ENCODE measurements at regions of chr5 and their contacts with region 1.

Region 1: DNA sequence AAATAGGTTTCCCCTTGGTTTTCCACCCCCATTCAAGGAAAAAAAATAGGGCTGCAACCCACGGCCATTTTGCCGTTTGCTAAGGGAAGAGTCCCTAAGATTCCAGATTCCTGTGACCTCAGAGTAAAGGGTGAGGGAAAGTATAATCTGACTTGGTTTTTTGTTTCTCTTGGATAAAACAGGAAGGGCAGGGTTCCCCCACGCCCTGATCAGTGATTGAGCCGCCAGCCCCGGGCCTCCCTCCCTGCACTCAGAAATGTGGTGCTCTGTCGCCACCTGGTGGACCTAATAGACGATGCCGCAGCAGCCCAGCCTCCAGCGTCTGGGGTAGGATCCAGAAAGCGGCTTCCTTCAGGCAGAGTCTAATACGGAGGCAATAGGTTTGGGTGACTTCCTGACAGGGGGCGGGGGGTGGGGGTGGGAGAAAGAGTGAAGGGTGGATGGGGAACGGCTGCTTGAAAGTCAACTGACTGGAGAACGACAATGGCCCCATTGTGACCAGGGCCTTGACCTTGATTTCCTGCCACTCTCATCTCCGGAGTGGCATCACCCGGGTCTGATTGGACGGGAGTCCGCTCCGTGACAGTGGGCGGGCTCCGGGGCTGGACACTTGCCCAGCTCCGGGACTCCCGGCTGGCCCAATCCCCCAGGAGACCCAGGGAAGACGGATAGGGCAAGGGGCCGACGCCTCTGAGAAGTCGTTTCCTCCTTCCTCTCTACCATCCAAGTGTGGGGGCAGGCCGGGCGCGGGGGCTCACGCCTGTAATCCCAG is 17.8 kb upstream of the CYSTM1 start:
- DNase-seq: peak; percentile 90
- ATAC-seq: peak; percentile 97
- H3K4me3 ChIP-seq: no peak overlapping the region
- H3K27ac ChIP-seq: no peak overlapping the region
- H3K4me1 ChIP-seq: peaks cover 0 to 10% of the 10 kb centered on the region in 2 experiments; a peak in 2 of 5 replicates
- H3K27me3 ChIP-seq: peaks cover 0 to 4% of the 10 kb centered on the region in 2 experiments; a peak in 1 of 5 replicates
- CTCF ChIP-seq: peak; percentile 88 to 95 (median 94)
- EP300 ChIP-seq: no peak
- POLR2A ChIP-seq: no peak
- RAD21 ChIP-seq: peak; percentile 93 to 96

Region 2: DNA sequence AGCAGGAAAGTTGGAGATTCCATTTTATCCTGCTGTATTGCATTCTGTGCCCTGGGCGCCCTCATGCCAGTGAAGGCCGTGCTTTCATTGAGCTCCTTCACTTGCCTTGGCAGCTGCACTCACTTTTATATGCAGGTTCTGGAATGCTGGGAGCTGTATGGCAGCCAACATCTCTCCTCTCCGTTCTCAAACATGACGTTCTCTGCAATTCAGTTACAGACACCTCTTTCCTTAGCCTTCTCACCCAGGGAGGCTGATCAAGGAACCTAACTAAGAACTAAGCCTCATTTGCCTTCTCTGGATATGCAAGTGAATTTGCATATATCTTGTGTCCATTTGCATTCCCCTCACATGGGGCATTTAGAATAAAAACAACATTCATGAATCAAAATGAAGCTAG is 72.7 kb before region 1 on chr5:
- CTCF ChIA-PET with region 1: no interaction called
- POLR2A ChIA-PET with region 1: interaction called, 4 read pairs
- in situ Hi-C with region 1: loop called (anchors 5 kb)
- intact Hi-C with region 1: no loop called
- DNase-seq: no peak
- ATAC-seq: no peak
- H3K4me3 ChIP-seq: no peak overlapping the region
- H3K27ac ChIP-seq: no peak overlapping the region
- H3K4me1 ChIP-seq: no peaks in the 10 kb centered on the region
- H3K27me3 ChIP-seq: peaks cover 5 to 8% of the 10 kb centered on the region in 2 experiments; a peak in 4 of 5 replicates
- CTCF ChIP-seq: no peak
- EP300 ChIP-seq: no peak
- POLR2A ChIP-seq: no peak
- RAD21 ChIP-seq: no peak

Region 3: GRCh38 chr5:140107312-140108083 is 49.7 kb before region 1 on chr5:
- CTCF ChIA-PET with region 1: no interaction called
- POLR2A ChIA-PET with region 1: interaction called, 4 read pairs
- in situ Hi-C with region 1: no loop called
- intact Hi-C with region 1: loop called (anchors 2 kb)
- DNase-seq: peak; percentile 89 to 96 (median 90)
- ATAC-seq: peak; percentile 87
- H3K4me3 ChIP-seq: peak overlapping the region; percentile 64
- H3K27ac ChIP-seq: peak overlapping the region; percentile 78
- H3K4me1 ChIP-seq: peaks cover 15 to 27% of the 10 kb centered on the region in 2 experiments
- H3K27me3 ChIP-seq: no peaks in the 10 kb centered on the region
- CTCF ChIP-seq: peak; percentile 34 to 42 (median 38); a peak in 2 of 6 replicates
- EP300 ChIP-seq: no peak
- POLR2A ChIP-seq: peak; percentile 90
- RAD21 ChIP-seq: no peak

Region 4: GRCh38 chr5:140205216-140205615 is 48.0 kb after region 1 on chr5:
- CTCF ChIA-PET with region 1: no interaction called
- POLR2A ChIA-PET with region 1: no interaction called
- in situ Hi-C with region 1: no loop called
- intact Hi-C with region 1: no loop called
- DNase-seq: no peak
- ATAC-seq: no peak
- H3K4me3 ChIP-seq: no peak overlapping the region
- H3K27ac ChIP-seq: no peak overlapping the region
- H3K4me1 ChIP-seq: peaks cover 8 to 10% of the 10 kb centered on the region in 2 experiments; a peak in 3 of 5 replicates
- H3K27me3 ChIP-seq: no peaks in the 10 kb centered on the region
- CTCF ChIP-seq: no peak
- EP300 ChIP-seq: no peak
- POLR2A ChIP-seq: no peak
- RAD21 ChIP-seq: no peak